PC-9 (cell line): ENCODE measurements at regions of chr3 and their contacts with region 1.

Region 1: GRCh38 chr3:198017100-198017499 is 57.1 kb downstream of the LMLN start:
- DNase-seq: no peak
- H3K4me3 ChIP-seq: no peak overlapping the region
- H3K27ac ChIP-seq: no peak overlapping the region
- H3K4me1 ChIP-seq: no peaks in the 10 kb centered on the region
- H3K27me3 ChIP-seq: no peaks in the 10 kb centered on the region
- CTCF ChIP-seq: no peak

Region 2: GRCh38 chr3:197854596-197855343 is 162.3 kb before region 1 on chr3:
- CTCF ChIA-PET with region 1: no interaction called
- POLR2A ChIA-PET with region 1: no interaction called
- intact Hi-C with region 1: no loop called
- DNase-seq: no peak
- H3K4me3 ChIP-seq: no peak overlapping the region
- H3K27ac ChIP-seq: no peak overlapping the region
- H3K4me1 ChIP-seq: no peaks in the 10 kb centered on the region
- H3K27me3 ChIP-seq: no peaks in the 10 kb centered on the region
- CTCF ChIP-seq: no peak

Region 3: DNA sequence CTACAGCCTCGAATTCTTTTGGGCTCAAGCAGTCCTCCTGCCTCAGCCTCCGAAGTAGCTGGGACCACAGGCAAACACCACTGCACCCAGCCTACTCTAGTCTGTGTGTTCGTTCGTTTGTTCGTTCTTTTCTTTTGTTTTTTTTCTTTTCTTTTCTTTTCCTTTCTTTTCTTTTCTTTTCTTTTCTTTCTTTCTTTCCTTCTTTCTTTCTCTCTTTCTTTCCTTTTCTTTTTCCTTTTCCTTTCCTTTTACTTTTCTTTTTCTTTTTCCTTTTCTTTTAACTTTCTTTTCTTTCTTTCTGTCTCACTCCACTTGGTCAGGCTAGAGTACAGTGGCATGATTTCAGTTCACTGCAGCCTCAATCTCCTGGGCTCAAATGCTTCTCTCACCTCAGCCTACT is 20.2 kb before region 1 on chr3:
- CTCF ChIA-PET with region 1: no interaction called
- POLR2A ChIA-PET with region 1: interaction called, 26 read pairs
- intact Hi-C with region 1: no loop called
- DNase-seq: no peak
- H3K4me3 ChIP-seq: no peak overlapping the region
- H3K27ac ChIP-seq: no peak overlapping the region
- H3K4me1 ChIP-seq: no peaks in the 10 kb centered on the region
- H3K27me3 ChIP-seq: no peaks in the 10 kb centered on the region
- CTCF ChIP-seq: no peak

Region 4: DNA sequence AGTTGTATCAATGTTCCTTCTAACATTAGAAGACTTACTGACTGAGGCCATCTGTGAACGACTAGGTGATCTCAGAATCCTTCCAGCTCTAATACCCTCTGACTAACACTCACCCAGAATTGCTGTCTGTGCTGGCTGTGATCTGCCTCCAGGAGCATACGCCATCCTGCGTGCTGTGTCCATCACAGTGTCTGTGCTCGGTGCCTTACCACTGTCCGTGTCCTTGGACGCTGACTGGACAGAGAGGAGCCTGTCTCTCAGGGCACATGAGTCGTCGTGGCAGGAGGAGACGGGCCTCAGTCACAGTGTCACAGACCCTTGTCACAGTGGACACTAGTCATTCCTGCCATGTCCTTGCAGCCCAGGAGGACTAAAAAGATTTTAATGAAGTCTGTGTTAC is 26.0 kb after region 1 on chr3:
- CTCF ChIA-PET with region 1: no interaction called
- POLR2A ChIA-PET with region 1: no interaction called
- intact Hi-C with region 1: no loop called
- DNase-seq: no peak
- H3K4me3 ChIP-seq: no peak overlapping the region
- H3K27ac ChIP-seq: no peak overlapping the region
- H3K4me1 ChIP-seq: no peaks in the 10 kb centered on the region
- H3K27me3 ChIP-seq: no peaks in the 10 kb centered on the region
- CTCF ChIP-seq: no peak

Region 5: DNA sequence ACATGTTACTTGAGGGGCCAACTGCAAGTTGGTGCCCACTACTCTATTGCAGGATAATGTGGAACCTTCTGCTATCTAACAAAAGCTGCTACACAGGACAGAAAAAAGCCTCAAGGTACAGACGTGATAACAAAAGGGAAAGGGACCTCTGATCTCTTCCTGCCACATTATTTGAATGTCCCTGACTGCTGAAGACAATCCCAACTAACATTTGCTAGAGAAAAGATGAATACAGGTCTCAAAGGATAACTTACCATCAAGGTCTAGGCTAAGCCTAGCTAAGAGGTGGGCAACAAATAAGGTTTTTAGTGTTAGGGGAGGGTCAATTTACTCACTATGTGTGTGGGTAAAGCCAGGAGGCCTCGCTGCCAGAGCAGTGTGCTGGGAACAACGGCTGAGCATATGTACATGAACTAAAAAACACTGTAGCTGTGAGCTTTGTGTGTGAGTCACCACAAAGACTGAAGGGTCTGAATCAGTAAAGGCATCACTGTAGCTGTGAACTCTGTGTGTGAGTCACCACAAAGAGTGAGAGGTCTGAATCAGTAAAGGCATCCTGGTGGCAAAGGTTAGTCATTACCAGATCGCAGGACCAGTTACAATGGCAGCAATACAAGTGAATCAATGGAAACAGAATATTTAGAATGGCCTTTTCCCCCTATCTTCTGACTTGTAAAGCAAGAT is 54.6 kb after region 1 on chr3:
- CTCF ChIA-PET with region 1: no interaction called
- POLR2A ChIA-PET with region 1: no interaction called
- intact Hi-C with region 1: loop called (anchors 5 kb)
- DNase-seq: peak; percentile 75 to 100
- H3K4me3 ChIP-seq: no peak overlapping the region
- H3K27ac ChIP-seq: peak overlapping the region; percentile 72
- H3K4me1 ChIP-seq: peaks cover 16% of the 10 kb centered on the region
- H3K27me3 ChIP-seq: no peaks in the 10 kb centered on the region
- CTCF ChIP-seq: peak; percentile 68